ENCODE measurements at regions of chr1 and their contacts with region 1.

Region 1: DNA sequence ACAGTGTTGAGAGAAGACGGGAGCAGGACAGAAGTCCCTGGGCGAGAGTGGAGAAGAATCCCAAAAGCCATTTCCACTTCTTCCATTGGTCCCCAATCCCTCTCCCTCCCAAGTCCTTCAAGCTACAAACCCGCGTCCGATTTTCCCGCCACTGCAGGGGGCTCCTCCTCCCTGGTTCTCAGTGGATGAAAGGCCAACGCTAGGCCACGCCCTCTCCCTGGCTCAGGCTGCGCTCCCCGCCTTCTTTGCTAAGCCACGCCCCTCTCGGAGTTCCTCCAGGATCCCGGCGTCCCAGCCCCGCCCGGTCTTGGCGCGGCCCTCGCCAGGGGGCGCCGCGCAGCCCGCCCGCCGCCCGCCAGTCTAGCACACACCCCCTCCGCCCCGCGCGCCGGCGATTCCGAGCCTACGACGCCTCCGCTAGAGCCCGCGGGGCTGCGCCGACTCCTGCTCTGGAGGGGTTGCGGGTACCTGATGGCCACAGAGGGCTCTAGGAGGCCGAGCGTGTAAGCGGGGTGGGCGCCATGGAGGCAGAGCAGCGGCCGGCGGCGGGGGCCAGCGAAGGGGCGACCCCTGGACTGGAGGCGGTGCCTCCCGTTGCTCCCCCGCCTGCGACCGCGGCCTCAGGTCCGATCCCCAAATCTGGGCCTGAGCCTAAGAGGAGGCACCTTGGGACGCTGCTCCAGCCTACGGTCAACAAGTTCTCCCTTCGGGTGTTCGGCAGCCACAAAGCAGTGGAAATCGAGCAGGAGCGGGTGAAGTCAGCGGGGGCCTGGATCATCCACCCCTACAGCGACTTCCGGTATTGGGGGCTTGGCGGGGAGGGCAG is at the start of gene HCN3:
- DNase-seq: peak; percentile 85 to 99
- H3K4me3 ChIP-seq: peak within 1 kb of the TSS; percentile 64 to 80
- H3K27ac ChIP-seq: peak within 1 kb of the TSS; percentile 53 to 64
- H3K4me1 ChIP-seq: peaks cover 6 to 15% of the 10 kb centered on the region in 2 donors
- H3K27me3 ChIP-seq: no peaks in the 10 kb centered on the region
- CTCF ChIP-seq: peak in 2 of 3 experiments; percentile 62 to 74
- total RNA-seq, gene HCN3: 2.6 TPM

Region 2: DNA sequence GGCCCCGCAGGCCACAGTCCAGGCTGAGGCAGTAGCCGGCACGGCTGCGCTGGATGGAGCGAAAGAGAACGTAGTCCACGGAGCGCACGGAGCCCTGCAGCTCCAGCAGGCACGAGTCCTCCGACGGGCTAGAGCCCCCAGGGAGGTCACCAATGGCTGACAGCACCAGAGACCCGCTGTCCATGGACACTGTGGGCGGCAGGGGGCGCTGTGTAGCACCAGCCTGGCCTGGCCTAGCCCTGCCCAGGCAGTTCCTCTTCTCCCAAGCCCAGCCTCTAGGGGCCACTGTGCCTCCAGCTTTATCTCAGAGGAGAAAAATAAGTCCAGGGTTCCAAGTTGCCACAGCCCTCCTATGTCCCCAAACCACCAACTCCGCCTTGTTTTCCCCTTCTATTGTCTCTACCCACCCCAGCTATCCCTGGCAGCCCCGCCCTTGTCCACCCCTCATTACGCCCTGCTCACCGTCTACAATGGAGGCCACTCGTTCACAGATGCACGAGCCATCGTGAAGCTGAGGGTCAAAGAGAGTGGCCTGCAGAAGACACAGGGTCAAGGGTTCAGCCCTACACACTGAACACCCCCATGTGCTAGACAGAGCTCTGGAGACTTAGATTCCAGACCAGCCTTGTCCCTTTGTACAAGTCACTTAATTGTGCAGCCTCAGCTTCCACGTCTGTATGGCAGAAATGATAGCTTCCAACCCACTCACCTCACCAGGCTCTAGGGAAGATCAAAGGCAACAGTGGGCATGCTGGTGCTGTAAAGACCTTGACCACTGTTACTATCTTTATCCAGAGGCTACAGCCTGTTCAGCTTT is 26.4 kb before region 1 on chr1:
- intact Hi-C with region 1: loop called (anchors 1 kb)
- DNase-seq: peak; percentile 55 to 96
- H3K4me3 ChIP-seq: peak overlapping the region; percentile 37 to 42
- H3K27ac ChIP-seq: peak overlapping the region; percentile 19 to 39
- H3K4me1 ChIP-seq: peaks cover 16 to 21% of the 10 kb centered on the region in 2 donors
- H3K27me3 ChIP-seq: no peaks in the 10 kb centered on the region
- CTCF ChIP-seq: peak; percentile 99 to 100 (median 99)

Region 3: GRCh38 chr1:155308493-155309422 is 31.5 kb after region 1 on chr1 and contains the start of gene FDPS:
- intact Hi-C with region 1: loop called (anchors 1 kb)
- DNase-seq: peak; percentile 98 to 100
- H3K4me3 ChIP-seq: peak within 1 kb of the TSS; percentile 70 to 77
- H3K27ac ChIP-seq: peak within 1 kb of the TSS; percentile 87
- H3K4me1 ChIP-seq: peaks cover 6 to 9% of the 10 kb centered on the region in 2 donors
- H3K27me3 ChIP-seq: no peaks in the 10 kb centered on the region
- CTCF ChIP-seq: peak in 1 of 3 experiments; percentile 23
- total RNA-seq, gene FDPS: 51.7 TPM

Region 4: DNA sequence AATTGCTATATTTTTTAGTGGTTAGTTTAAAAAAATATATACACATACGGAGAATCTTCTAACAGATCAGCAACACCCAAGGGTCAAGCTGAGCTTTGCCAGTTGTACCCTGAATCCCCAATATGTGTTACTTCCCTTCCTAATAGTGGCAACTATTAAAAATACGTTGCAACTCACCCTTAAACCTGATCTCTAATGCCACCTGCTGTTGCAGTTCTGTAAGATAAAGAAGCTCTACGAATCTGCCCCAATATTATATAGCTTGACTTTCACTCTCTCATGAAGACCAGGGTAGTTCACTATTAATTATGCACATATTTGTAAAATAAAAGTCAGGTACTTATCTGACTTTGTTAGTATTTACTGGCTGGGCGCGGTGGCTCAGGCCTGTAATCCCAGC is 226.9 kb after region 1 on chr1:
- intact Hi-C with region 1: loop called (anchors 10 kb)
- DNase-seq: no peak
- H3K4me3 ChIP-seq: no peak overlapping the region
- H3K27ac ChIP-seq: no peak overlapping the region
- H3K4me1 ChIP-seq: peaks cover 0 to 15% of the 10 kb centered on the region in 2 donors
- H3K27me3 ChIP-seq: no peaks in the 10 kb centered on the region
- CTCF ChIP-seq: peak in 1 of 3 experiments; percentile 44

Region 5: GRCh38 chr1:155591770-155592169 is 314.5 kb after region 1 on chr1:
- intact Hi-C with region 1: loop called (anchors 5 kb)
- DNase-seq: no peak
- H3K4me3 ChIP-seq: no peak overlapping the region
- H3K27ac ChIP-seq: no peak overlapping the region
- H3K4me1 ChIP-seq: no peaks in the 10 kb centered on the region
- H3K27me3 ChIP-seq: no peaks in the 10 kb centered on the region
- CTCF ChIP-seq: peak; percentile 29 to 58 (median 43)

Measured in ascending aorta (tissue), 2 donors.